Naive thymus-derived CD4-positive, alpha-beta T cell (primary cell): ENCODE measurements at regions of chr16 and their contacts with region 1.

Region 1: DNA sequence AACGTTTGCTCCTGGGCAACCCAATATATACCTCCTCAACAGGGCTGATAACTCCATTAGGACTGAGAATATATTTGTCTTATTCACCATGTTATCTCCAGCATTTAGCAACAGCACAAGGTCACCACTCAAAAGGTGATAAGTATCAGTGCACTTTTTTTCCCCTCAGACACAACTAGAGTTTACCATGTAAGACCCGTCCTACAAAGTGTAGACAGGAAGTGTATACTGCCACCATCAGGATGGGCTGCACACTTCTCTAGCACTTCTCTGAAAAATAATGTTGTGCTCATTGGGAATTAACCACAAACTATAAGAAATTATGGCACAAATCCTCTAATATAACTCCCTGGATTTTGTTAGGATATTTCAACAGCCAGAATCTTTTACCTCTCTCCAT is 5.7 kb upstream of the VAT1L start:
- DNase-seq: no peak
- ATAC-seq: no peak
- H3K4me3 ChIP-seq: no peak overlapping the region
- H3K4me3 Mint-ChIP-seq: no peak overlapping the region
- H3K27ac ChIP-seq: no peak overlapping the region
- H3K27ac Mint-ChIP-seq: no peak overlapping the region
- H3K4me1 ChIP-seq: no peaks in the 10 kb centered on the region
- H3K4me1 Mint-ChIP-seq: no peaks in the 10 kb centered on the region
- H3K27me3 ChIP-seq: peaks cover 0 to 4% of the 10 kb centered on the region in 2 donors
- H3K27me3 Mint-ChIP-seq: peaks cover 20 to 41% (median 37%) of the 10 kb centered on the region in 5 donors

Region 2: GRCh38 chr16:77133706-77134105 is 649.0 kb before region 1 on chr16:
- CTCF ChIA-PET with region 1: no interaction called
- POLR2A ChIA-PET with region 1: no interaction called
- intact Hi-C with region 1: no loop called
- DNase-seq: no peak
- ATAC-seq: no peak
- H3K4me3 ChIP-seq: no peak overlapping the region
- H3K4me3 Mint-ChIP-seq: no peak overlapping the region
- H3K27ac ChIP-seq: no peak overlapping the region
- H3K27ac Mint-ChIP-seq: no peak overlapping the region
- H3K4me1 ChIP-seq: no peaks in the 10 kb centered on the region
- H3K4me1 Mint-ChIP-seq: no peaks in the 10 kb centered on the region
- H3K27me3 ChIP-seq: no peaks in the 10 kb centered on the region
- H3K27me3 Mint-ChIP-seq: peaks cover 0 to 25% (median 13%) of the 10 kb centered on the region in 5 donors

Region 3: GRCh38 chr16:77749415-77749814 is 33.3 kb before region 1 on chr16:
- CTCF ChIA-PET with region 1: no interaction called
- POLR2A ChIA-PET with region 1: no interaction called
- intact Hi-C with region 1: no loop called
- DNase-seq: no peak
- ATAC-seq: no peak
- H3K4me3 ChIP-seq: no peak overlapping the region
- H3K4me3 Mint-ChIP-seq: no peak overlapping the region
- H3K27ac ChIP-seq: no peak overlapping the region
- H3K27ac Mint-ChIP-seq: no peak overlapping the region
- H3K4me1 ChIP-seq: no peaks in the 10 kb centered on the region
- H3K4me1 Mint-ChIP-seq: peaks cover 0 to 2% (median 0%) of the 10 kb centered on the region in 7 donors
- H3K27me3 ChIP-seq: no peaks in the 10 kb centered on the region
- H3K27me3 Mint-ChIP-seq: peaks cover 0 to 35% (median 19%) of the 10 kb centered on the region in 5 donors

Region 4: GRCh38 chr16:77868478-77868877 is 85.8 kb after region 1 on chr16:
- CTCF ChIA-PET with region 1: interaction called, 12 read pairs
- POLR2A ChIA-PET with region 1: no interaction called
- intact Hi-C with region 1: no loop called
- DNase-seq: peak in 1 of 9 donors; percentile 24
- ATAC-seq: no peak
- H3K4me3 ChIP-seq: no peak overlapping the region
- H3K4me3 Mint-ChIP-seq: no peak overlapping the region
- H3K27ac ChIP-seq: no peak overlapping the region
- H3K27ac Mint-ChIP-seq: no peak overlapping the region
- H3K4me1 ChIP-seq: no peaks in the 10 kb centered on the region
- H3K4me1 Mint-ChIP-seq: peaks cover 0 to 14% (median 6%) of the 10 kb centered on the region in 7 donors
- H3K27me3 ChIP-seq: no peaks in the 10 kb centered on the region
- H3K27me3 Mint-ChIP-seq: peaks cover 0 to 9% (median 3%) of the 10 kb centered on the region in 5 donors

Region 5: GRCh38 chr16:77987810-77988209 is 205.1 kb after region 1 on chr16:
- CTCF ChIA-PET with region 1: no interaction called
- POLR2A ChIA-PET with region 1: no interaction called
- intact Hi-C with region 1: loop called in 1 of 2 experiments (anchors 5 kb)
- DNase-seq: no peak
- ATAC-seq: no peak
- H3K4me3 ChIP-seq: no peak overlapping the region
- H3K4me3 Mint-ChIP-seq: no peak overlapping the region
- H3K27ac ChIP-seq: no peak overlapping the region
- H3K27ac Mint-ChIP-seq: no peak overlapping the region
- H3K4me1 ChIP-seq: no peaks in the 10 kb centered on the region
- H3K4me1 Mint-ChIP-seq: peaks cover 0 to 3% (median 0%) of the 10 kb centered on the region in 7 donors
- H3K27me3 ChIP-seq: no peaks in the 10 kb centered on the region
- H3K27me3 Mint-ChIP-seq: peaks cover 3 to 38% (median 15%) of the 10 kb centered on the region in 5 donors